Mammary epithelial cell (primary cell): ENCODE measurements at regions of chr17 and their contacts with region 1.

Region 1: DNA sequence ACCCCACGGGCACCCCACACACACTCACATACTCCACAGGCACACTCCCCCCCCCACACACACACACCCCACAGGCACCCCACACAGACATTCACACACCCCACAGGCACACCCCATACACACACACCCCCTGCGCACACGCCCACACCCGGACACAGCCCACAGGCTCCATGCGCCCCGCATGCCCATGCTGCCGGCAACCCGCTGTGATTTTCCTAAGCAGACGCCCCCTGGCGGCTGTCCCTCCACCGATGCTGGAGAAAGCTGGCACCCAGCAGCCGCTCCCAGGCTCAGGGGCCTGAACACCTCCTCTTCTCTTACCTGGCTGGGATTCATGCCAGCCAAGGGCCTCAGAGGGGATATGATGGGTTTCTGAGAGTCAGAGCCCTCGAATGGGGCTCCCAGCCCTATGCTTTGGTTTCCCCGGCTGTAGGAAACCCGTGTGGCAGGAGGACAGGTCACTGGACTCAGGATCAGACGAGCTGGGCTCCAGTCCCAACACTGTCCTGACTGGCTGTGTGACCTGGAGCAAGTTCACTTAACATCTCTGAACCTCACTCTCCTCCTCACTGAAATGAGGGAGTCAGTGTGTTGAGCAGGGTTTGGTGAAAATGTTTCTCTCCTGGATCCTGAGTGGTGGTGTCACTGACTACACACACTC is 19.6 kb upstream of the TNFRSF13B start:
- DNase-seq: peak; percentile 39
- H3K4me3 ChIP-seq: no peak overlapping the region
- H3K27ac ChIP-seq: no peak overlapping the region
- H3K4me1 ChIP-seq: no peaks in the 10 kb centered on the region
- H3K27me3 ChIP-seq: no peaks in the 10 kb centered on the region
- CTCF ChIP-seq: peak; percentile 68 to 89

Region 2: DNA sequence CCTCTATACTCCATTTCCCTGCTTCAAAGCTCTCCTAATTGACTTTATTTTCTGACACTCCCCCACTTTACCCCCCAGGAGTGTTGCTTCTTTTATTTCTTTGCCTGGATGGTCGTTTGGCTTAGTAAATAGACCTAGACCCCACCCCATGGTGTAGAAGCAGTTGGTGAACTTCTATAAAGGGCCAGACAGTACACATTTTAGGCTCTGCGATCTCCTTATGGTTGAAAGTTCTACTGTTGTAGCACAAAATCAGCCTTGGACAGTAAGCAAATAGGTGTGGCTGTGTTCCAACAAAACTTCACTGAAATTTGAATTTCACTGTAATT is 454.4 kb before region 1 on chr17:
- CTCF ChIA-PET with region 1: no interaction called
- dilution Hi-C with region 1: no loop called
- in situ Hi-C with region 1: no loop called
- intact Hi-C with region 1: loop called (anchors 1 kb)
- DNase-seq: no peak
- H3K4me3 ChIP-seq: no peak overlapping the region
- H3K27ac ChIP-seq: no peak overlapping the region
- H3K4me1 ChIP-seq: no peaks in the 10 kb centered on the region
- H3K27me3 ChIP-seq: no peaks in the 10 kb centered on the region
- CTCF ChIP-seq: no peak

Region 3: DNA sequence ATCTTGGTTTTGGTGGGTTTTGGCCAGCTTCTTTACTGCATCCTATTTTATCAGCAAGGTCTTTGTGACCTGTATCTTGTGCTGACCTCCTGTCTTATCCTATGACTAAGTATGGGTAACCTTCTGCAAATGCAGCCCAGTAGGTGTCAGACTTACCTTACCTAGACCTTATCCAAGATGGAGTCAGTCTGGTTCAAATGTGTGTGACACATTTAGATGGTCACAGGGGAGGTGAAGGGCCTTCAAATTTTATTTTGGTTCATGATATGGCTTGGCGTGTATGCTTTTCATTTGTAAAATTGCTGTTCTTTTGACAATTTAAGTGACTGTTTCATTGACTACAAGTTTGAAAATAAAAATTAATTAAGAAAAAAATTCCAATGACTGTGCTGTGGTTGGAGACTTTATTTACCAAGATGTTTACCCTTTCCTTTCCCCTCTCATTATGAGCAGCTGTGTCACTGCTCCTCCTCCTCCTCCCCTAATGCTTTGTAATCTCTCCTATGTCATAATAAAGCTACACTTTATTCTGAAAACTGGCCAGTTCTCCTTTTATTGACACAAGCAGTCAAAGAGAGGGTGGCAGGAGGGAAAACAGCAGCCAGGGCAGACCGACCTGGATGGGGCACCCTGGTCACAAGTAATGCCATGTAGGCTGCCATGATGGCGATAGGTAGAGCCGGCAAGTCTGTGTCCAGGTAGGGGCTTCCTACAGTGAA is 68.9 kb before region 1 on chr17:
- CTCF ChIA-PET with region 1: no interaction called
- dilution Hi-C with region 1: no loop called
- in situ Hi-C with region 1: no loop called
- intact Hi-C with region 1: loop called (anchors 1 kb)
- DNase-seq: no peak
- H3K4me3 ChIP-seq: no peak overlapping the region
- H3K27ac ChIP-seq: no peak overlapping the region
- H3K4me1 ChIP-seq: no peaks in the 10 kb centered on the region
- H3K27me3 ChIP-seq: no peaks in the 10 kb centered on the region
- CTCF ChIP-seq: peak; percentile 5 to 35

Region 4: GRCh38 chr17:16945663-16946218 is 45.7 kb before region 1 on chr17:
- CTCF ChIA-PET with region 1: no interaction called
- dilution Hi-C with region 1: no loop called
- in situ Hi-C with region 1: no loop called
- intact Hi-C with region 1: no loop called
- DNase-seq: no peak
- H3K4me3 ChIP-seq: no peak overlapping the region
- H3K27ac ChIP-seq: no peak overlapping the region
- H3K4me1 ChIP-seq: no peaks in the 10 kb centered on the region
- H3K27me3 ChIP-seq: peaks cover 3% of the 10 kb centered on the region
- CTCF ChIP-seq: peak in 1 of 2 donors; percentile 7

Region 5: DNA sequence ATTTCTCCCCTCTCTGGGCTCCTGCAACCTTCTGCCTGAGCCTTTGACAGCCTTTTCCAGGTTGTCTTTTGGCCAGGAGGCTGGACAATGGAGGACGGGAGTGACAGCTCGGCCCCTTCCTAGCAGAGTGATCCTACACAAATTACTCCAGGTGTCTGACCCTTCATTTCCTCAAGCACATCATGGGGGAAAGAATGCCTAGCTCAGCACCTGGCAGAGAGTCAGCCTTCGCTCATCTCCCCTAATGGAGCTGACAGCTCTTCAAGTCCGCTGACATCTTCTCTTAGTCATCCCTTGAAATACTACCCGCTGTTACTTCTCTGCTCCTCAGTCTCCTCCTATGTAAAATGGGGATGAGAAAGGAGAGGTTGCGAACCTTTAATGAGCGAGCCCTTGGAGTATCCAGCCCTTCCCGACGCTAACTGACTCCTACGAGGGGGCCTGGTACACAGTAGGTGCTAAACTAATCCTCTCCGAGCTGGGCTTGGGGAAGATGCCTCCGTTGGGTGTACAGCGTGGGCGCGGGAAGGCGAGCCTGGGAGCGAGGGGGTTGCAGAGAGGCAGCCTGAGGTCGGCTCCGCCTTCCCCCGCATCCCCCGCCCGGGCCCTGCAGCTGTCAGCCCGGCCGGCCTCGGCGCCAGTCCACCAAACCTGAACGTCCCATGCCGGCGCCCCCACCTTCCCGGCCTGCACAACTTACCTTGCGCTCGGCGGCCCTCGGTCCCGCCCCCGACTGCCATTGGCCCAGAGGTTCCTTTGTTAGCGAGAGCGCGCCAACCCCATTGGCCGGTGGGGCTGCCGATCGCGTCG is 50.3 kb after region 1 on chr17:
- CTCF ChIA-PET with region 1: no interaction called
- dilution Hi-C with region 1: no loop called
- in situ Hi-C with region 1: no loop called
- intact Hi-C with region 1: no loop called
- DNase-seq: peak; percentile 96
- H3K4me3 ChIP-seq: peak overlapping the region; percentile 44 to 57 (median 53)
- H3K27ac ChIP-seq: peak overlapping the region; percentile 60
- H3K4me1 ChIP-seq: peaks cover 29% of the 10 kb centered on the region
- H3K27me3 ChIP-seq: no peaks in the 10 kb centered on the region
- CTCF ChIP-seq: no peak